ENCODE measurements at regions of chr1 and their contacts with region 1.

Region 1: DNA sequence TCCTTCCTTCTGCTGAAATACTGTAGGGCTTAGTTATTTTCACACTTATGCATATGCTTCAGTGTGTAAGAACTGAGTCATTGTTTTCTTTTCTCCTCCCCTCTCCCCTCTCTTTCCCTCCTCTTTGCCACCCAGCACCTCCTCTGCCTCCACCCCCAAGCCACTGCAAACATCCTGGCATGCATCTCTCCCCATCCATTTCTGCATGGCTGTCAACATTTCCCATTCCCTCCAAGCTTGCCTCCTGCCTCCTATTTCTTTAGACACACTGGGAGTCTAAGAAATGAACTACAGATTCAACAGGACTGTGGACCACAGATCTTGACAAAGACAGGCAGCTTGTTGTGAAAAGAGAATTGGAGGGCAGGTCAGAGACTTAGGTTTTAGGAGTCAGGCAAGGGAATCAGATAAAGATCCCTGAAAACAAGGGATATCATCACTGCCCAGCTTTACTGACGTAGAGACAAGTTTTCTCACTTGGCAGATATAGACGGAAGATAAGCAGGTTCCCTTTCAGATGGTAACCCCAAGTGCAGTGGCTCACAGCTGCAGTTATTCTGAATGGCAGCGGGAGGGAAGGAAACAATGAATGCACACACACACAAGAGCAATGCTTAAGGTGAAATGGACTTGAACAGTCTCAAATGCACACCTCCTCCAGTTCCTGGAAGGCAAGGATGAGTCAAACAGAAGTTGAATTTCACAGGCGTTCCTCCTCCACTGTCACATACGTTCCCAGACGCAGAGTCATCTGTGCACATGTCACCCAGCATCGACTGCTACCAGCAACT is 56.1 kb downstream of the HIVEP3 start:
- DNase-seq: peak; percentile 74 to 95
- H3K4me3 ChIP-seq: 0 out of 2 replicates have a peak overlapping the region, but pooled peaks have one; percentile 1
- H3K27ac ChIP-seq: peak overlapping the region; percentile 75
- H3K4me1 ChIP-seq: peaks cover 65% of the 10 kb centered on the region
- H3K27me3 ChIP-seq: no peaks in the 10 kb centered on the region
- CTCF ChIP-seq: no peak

Region 2: DNA sequence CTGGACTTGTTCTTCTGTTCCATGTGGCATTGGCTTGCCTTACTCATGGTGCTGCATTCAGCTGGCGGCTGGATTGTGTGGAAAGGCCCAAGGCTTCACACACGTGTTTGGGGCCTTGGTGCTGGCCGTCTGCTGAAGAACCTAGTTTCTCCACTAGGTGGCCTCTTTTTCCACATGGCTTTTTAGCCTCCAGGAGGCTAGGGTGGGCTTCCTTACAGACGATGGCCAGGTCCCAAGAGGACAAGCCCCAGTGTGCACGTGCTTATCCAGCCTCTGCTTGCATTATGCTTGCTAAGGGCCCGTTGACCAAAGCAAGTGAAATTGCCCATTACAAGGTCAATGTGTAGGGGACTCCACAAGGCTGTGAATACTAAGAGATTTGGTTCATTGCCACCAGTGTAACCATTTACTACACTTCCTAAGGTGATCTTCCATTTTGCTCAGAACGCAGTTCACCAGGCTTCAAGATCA is 548.9 kb before region 1 on chr1:
- CTCF ChIA-PET with region 1: no interaction called
- POLR2A ChIA-PET with region 1: no interaction called
- intact Hi-C with region 1: no loop called
- DNase-seq: no peak
- H3K4me3 ChIP-seq: no peak overlapping the region
- H3K27ac ChIP-seq: no peak overlapping the region
- H3K4me1 ChIP-seq: peaks cover 12% of the 10 kb centered on the region; the same call in 1 of the 2 replicates
- H3K27me3 ChIP-seq: no peaks in the 10 kb centered on the region
- CTCF ChIP-seq: peak; percentile 65

Region 3: DNA sequence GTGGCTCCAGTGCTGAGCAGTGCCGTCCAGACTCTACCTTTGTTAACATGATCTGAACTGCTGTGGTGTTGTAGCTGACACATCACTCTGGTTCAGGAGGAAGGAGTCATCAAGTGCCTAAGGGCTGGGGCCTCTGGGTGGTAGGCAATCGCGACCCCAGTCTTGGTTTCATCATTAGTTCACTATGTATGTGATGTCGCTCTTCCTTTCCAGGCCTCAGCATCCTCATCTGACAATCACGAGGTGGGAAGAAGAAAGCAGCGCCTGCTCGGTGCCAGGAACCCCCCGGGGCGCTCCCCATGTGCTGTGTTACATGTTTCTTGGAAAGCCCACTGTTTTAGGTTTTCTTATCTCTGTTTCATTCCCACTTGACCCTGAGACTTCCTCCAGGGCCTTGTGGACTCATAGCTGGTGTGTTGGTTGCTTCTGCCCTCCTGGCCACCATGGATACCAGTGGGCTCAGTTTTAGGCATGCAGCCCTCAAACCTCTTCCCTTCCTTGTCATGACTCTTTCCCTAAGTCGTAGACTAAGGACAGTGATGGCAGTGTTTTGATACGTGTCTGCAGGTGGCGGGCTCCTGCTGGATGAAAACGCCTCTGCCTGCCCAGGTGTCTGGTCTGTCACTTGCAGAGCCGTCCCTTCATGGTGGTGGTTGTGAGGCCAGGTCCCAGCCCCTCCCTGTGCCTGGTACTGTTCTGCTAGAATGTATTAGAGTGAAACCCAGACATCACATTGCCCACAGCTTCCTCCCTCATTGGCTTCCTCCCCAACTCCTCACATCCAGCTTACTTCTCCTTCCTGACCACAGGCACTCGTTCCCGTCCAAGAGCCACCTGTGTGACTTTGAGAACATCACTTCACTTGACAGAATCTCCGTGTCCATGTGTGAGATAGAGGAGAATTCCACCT is 518.5 kb before region 1 on chr1:
- CTCF ChIA-PET with region 1: interaction called, 12 read pairs
- POLR2A ChIA-PET with region 1: no interaction called
- intact Hi-C with region 1: no loop called
- DNase-seq: peak in 1 of 2 experiments; percentile 35
- H3K4me3 ChIP-seq: no peak overlapping the region
- H3K27ac ChIP-seq: no peak overlapping the region
- H3K4me1 ChIP-seq: peaks cover 64% of the 10 kb centered on the region
- H3K27me3 ChIP-seq: no peaks in the 10 kb centered on the region
- CTCF ChIP-seq: no peak

Region 4: GRCh38 chr1:41678111-41678878 is 184.3 kb before region 1 on chr1:
- CTCF ChIA-PET with region 1: no interaction called
- POLR2A ChIA-PET with region 1: no interaction called
- intact Hi-C with region 1: loop called (anchors 5 kb)
- DNase-seq: no peak
- H3K4me3 ChIP-seq: no peak overlapping the region
- H3K27ac ChIP-seq: no peak overlapping the region
- H3K4me1 ChIP-seq: peaks cover 13% of the 10 kb centered on the region
- H3K27me3 ChIP-seq: no peaks in the 10 kb centered on the region
- CTCF ChIP-seq: no peak

Region 5: GRCh38 chr1:41851589-41851988 is 11.0 kb before region 1 on chr1:
- CTCF ChIA-PET with region 1: no interaction called
- POLR2A ChIA-PET with region 1: interaction called, 12 read pairs
- intact Hi-C with region 1: no loop called
- DNase-seq: peak; percentile 84 to 98
- H3K4me3 ChIP-seq: no peak overlapping the region
- H3K27ac ChIP-seq: peak overlapping the region; percentile 80
- H3K4me1 ChIP-seq: peaks cover 87% of the 10 kb centered on the region
- H3K27me3 ChIP-seq: no peaks in the 10 kb centered on the region
- CTCF ChIP-seq: no peak

Region 6: GRCh38 chr1:41902125-41902524 is 39.5 kb after region 1 on chr1:
- CTCF ChIA-PET with region 1: no interaction called
- POLR2A ChIA-PET with region 1: no interaction called
- intact Hi-C with region 1: loop called (anchors 1 kb)
- DNase-seq: peak; percentile 87 to 91
- H3K4me3 ChIP-seq: peak overlapping the region; percentile 52; the same call in 1 of the 2 replicates
- H3K27ac ChIP-seq: peak overlapping the region; percentile 95
- H3K4me1 ChIP-seq: peaks cover 56% of the 10 kb centered on the region
- H3K27me3 ChIP-seq: no peaks in the 10 kb centered on the region
- CTCF ChIP-seq: no peak

Region 7: GRCh38 chr1:42035830-42036604 is 173.4 kb after region 1 on chr1:
- CTCF ChIA-PET with region 1: no interaction called
- POLR2A ChIA-PET with region 1: no interaction called
- intact Hi-C with region 1: loop called (anchors 2 kb)
- DNase-seq: peak; percentile 78 to 99
- H3K4me3 ChIP-seq: peak overlapping the region; percentile 86
- H3K27ac ChIP-seq: no peak overlapping the region
- H3K4me1 ChIP-seq: peaks cover 18% of the 10 kb centered on the region
- H3K27me3 ChIP-seq: no peaks in the 10 kb centered on the region
- CTCF ChIP-seq: no peak